Left ventricle myocardium superior (tissue), 1 donor: ENCODE measurements at regions of chr5 and their contacts with region 1.

Region 1: GRCh38 chr5:146273109-146273508 is 65.5 kb upstream of the POU4F3 start:
- DNase-seq: no peak
- ATAC-seq: no peak

Region 2: DNA sequence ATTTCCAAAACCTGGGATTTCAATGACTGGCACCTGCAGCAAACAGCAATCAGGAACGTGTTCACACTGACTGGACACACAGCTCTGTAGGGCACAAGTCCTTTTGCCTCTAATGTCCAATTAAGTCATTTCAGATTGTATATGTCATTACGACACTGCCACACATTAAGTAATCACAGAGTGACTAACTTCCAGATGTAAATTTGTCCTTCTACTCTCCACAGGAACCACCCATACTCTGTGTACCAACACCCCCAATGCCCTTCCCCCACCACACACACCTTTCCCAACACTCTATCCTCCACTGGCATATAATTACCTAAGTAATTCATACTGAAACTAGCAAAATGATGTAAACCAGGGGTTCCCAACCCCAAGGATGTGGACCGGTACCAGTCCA is 121.1 kb before region 1 on chr5:
- intact Hi-C with region 1: loop called (anchors 10 kb)
- DNase-seq: no peak
- ATAC-seq: no peak